Activated T-helper 1 cell treated with anti-CD3 and anti-CD28 coated beads, Interleukin-12 subunit alpha, Interleukin-12 subunit beta, Interleukin-2, Interleukin-4 antibody, amounts not matched to agents 30 ng/mL and 10 ng/mL and 1 ng/mL, durations not matched to agents 14 hours and 24 hours and 36 hours (primary cell): ENCODE measurements at regions of chr7 and their contacts with region 1.

Region 1: DNA sequence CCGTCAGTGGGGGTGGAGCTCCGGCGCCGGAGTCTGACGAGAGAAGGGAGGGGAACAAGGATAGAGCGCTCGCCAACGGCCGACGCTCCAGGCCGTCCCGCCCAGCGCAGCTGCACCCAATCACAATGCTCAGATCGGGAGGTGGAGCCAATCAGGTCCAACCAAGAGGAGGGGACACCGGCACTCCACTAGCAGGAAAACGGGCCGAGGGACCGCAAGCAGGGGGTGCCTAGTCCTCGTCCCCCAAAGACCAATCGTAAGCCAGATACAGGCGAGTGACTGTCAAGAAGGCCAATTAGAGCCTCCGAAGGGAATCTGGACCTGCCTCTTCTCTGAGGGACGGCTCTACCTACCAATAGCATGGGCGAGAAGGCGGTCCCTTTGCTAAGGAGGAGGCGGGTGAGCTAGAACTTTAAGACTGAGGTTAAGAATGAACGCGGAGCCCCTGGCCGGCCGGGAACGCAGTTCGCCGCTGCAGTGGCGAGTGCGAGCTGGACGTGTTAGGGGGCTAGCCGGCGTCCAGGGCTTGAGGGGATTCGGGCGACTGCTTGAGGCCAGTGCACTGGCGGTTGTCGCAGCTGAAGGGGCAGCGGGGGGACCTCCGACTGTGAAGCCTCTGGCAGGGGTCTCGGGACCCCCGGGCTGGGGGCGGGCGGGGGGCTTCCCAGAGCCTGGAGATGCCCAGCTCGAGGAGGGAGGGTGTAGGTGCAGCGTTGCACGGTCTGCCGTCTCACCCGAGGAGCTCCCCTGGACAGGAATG is at the start of gene FBXO24:
- DNase-seq: peak; percentile 100
- H3K4me3 Mint-ChIP-seq: peak within 1 kb of the TSS; percentile 87
- H3K27ac Mint-ChIP-seq: peak within 1 kb of the TSS; percentile 89
- H3K4me1 Mint-ChIP-seq: peaks cover 23% of the 10 kb centered on the region
- H3K27me3 Mint-ChIP-seq: peaks cover 3% of the 10 kb centered on the region
- total RNA-seq, gene FBXO24: 0.27 and 0.41 TPM in 2 replicates

Region 2: DNA sequence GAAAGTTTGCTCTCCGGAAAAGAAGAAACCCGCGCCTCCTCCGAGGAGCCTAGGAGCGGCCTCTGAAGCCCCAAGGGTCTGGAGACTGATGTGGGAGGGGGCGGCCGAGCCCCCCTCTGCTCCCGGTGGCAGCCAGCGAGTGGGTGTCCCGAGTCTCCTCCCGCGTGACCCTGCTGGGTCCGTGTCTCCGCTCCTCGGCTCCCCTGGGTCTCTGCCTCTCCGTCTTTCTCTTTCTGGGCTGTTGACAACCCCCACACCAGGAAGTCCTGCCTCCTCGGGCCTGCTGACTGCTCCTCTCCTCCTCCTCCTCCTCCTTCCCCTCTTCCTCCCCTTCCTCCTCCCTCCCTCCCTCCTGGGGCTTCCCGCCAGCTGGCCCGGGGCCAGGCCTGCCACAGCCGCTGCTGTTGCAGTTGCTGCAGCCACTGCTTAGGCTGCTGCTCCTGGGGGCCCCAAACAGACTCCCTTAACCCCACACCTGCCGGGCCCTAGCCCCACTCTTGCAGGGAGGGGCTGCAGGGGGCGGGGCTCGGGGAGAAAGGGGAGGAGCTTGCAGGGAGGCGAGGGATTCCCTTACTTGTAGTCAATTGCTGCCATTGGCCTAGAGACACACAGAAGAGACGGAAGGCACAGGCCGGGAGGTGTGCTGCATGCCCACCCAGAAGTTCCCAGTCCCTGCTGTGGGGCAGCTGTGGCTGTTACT is 107.3 kb before region 1 on chr7 and contains the start of gene TSC22D4:
- intact Hi-C with region 1: loop called (anchors 1 kb)
- DNase-seq: peak; percentile 85
- H3K4me3 Mint-ChIP-seq: peak within 1 kb of the TSS; percentile 99
- H3K27ac Mint-ChIP-seq: peak within 1 kb of the TSS; percentile 93
- H3K4me1 Mint-ChIP-seq: peaks cover 35% of the 10 kb centered on the region
- H3K27me3 Mint-ChIP-seq: peaks cover 6% of the 10 kb centered on the region
- total RNA-seq, gene TSC22D4: 126 and 134 TPM in 2 replicates

Region 3: DNA sequence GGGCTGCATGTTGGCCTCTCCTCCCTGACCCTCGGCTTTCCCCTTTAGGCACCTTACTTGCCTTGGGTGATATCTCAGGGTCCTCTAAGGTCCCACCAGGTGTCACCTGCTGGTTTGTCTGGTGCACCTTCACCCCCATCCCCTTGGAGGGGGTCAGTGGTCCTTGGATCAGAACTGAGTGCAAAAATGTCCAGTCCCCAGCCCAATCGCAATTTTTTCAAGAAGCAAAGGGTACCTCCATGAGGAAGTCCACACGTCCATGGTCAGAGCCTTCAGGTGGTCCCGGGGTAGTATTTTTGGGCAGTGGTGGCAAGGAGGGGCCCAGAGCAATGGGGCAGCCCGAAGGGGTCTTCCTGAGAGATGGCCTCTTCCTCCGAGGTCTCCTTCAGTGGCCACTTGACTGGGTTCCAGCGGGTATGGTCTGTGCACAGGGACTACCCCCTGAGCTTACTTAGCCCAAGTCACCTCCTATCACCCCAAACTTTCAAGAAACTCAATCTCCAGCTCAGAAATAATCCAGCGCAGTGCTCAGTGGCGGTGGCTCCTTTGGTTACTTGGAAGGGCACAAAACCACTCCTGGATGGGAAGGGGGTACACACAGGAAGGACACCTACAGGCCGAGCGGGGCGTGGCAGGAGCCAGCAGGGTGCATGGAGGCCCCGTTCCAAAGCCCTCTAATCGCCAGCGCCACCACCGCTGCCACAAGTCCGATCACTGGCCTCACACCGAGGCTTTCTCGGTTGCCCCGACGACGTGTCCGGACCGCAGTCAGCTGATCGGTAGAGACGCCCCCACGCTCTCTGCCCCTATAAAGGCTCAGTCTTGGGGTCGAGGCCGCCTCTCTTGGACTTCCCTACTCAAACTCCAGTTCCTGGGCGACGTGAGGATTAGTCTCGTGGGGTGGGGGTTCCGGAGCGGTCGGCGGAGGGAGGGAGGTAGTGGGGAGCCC is 17.3 kb before region 1 on chr7:
- intact Hi-C with region 1: loop called (anchors 1 kb)
- DNase-seq: no peak
- H3K4me3 Mint-ChIP-seq: peak overlapping the region; percentile 11
- H3K27ac Mint-ChIP-seq: no peak overlapping the region
- H3K4me1 Mint-ChIP-seq: peaks cover 29% of the 10 kb centered on the region
- H3K27me3 Mint-ChIP-seq: peaks cover 7% of the 10 kb centered on the region

Region 4: DNA sequence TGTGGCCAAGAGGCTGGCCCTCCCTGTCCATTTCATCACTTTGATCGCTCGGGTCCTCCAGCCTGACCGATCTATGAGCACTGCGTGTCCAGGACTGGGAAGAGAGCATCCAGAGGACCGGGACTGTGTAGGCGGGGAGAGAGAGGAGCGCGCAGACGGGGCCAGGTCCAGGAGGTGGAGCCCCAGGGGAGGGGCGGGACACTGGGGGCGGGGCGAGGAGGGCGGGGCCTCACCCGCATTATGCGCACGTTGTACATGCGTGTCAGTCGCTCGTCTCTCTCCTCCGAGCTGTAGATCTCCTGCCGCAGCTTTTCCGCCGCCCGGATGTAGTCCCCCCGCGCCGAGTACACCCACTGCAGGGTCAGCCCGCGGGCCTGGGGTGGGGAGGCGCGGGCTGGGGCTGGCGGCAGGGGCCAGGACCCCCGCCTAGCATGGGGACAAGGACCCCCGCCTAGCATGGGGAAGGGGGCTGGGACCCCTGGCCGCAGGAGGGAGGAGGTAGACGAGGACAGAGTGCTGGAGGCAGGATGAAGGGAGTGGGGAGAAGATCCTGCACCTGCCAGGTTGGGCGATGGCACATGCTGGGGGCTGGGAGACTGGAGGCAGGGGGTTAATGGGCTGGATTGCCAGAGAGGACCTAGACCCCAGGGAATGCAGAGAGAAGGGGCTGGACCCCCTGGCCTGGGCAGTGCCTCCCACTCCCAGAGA is 40.2 kb after region 1 on chr7:
- intact Hi-C with region 1: loop called (anchors 1 kb)
- DNase-seq: peak; percentile 79
- H3K4me3 Mint-ChIP-seq: peak overlapping the region; percentile 71
- H3K27ac Mint-ChIP-seq: peak overlapping the region; percentile 63
- H3K4me1 Mint-ChIP-seq: peaks cover 45% of the 10 kb centered on the region
- H3K27me3 Mint-ChIP-seq: no peaks in the 10 kb centered on the region

Region 5: DNA sequence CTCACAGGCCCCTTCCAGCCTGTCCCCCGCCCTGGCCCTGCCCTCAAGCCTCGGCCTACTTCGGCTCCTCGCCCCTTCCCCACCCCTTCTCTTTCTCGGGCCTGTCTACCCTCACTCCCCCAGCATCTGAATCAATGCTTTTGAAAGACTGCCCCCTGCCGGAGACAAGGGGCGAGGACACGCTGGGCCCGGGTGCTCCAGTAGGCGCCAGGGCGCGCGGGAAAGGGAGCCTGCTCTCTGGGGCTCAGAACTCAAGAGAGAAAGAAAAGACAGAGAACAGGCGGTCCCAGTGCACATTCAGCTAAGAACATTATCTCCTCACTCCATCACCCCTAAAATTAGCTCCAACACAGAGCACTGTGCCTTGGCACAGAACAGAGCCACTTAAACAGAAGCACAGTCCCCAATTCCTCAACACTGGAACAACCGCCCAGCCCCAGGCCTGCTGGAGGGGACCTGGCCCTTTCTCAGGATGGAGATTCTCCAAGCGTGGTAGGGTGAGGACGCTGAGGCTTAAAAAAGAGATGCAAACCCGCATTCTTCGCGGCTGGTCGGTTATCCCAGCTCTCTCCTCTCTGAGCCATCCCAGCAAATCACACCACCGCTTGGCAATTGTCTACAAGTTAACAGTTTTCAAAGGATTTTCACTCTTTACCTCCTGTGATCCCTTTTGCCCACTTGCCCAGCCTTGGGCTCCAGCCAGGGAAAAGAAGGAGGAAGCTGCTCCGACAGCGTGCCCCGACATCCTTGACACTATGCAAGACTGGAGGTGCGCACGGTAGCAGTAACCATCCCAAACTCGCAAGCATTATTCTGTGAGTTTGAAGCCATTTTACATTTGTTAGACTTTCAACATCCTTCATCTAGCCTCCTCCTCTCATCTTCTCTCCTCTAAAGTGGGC is 105.5 kb after region 1 on chr7:
- intact Hi-C with region 1: loop called (anchors 1 kb)
- DNase-seq: peak; percentile 74
- H3K4me3 Mint-ChIP-seq: peak overlapping the region; percentile 94
- H3K27ac Mint-ChIP-seq: peak overlapping the region; percentile 45
- H3K4me1 Mint-ChIP-seq: peaks cover 27% of the 10 kb centered on the region
- H3K27me3 Mint-ChIP-seq: peaks cover 16% of the 10 kb centered on the region

Region 6: DNA sequence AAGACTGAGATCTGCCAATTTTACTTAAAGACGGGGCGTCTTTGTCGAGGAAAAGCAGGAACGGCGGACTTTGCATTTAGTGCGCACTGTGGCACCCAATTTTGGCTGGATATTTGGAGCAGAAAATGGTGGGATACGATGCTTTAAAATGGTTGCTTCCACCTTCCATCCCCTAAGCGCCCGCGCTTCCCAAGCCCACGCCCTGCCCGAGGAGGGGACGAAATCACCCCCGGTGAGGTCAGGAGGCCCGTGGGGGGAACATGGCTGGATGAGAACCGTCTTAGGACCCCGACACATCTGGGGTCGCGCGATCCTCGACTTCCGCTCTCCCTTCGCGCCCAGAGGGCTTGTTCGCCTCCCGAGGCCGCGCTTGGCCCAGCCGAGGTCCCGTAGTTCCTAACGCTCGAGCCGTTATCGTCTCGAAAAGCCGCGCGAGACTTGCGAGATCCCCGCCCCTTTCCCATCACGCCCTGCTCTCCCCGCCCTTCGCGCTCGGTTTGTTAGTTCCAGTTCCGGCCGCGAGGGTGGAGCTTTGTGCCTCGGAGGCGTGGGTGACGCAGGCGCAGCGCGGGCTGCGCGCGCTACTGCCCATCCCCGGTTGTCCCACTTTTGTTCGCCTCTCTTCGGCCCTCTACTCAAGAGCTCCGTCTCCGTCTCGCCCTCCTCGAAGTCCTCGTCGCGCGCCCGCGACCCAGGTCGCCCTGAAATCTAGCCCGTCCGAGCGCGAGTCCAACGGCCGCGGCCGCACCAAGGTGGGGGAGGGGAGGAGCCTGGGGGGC is 288.3 kb after region 1 on chr7 and contains the start of gene SRRT:
- intact Hi-C with region 1: loop called (anchors 2 kb)
- DNase-seq: peak; percentile 98
- H3K4me3 Mint-ChIP-seq: peak within 1 kb of the TSS; percentile 98
- H3K27ac Mint-ChIP-seq: peak within 1 kb of the TSS; percentile 97
- H3K4me1 Mint-ChIP-seq: peaks cover 40% of the 10 kb centered on the region
- H3K27me3 Mint-ChIP-seq: no peaks in the 10 kb centered on the region
- total RNA-seq, gene SRRT: 294 and 306 TPM in 2 replicates